ENCODE measurements at regions of chr2 and their contacts with region 1.

Region 1: GRCh38 chr2:177799531-177799930 is 273.0 kb downstream of the PDE11A start:
- DNase-seq: no peak
- ATAC-seq: peak in 2 of 4 donors; percentile 49 to 61
- H3K4me3 ChIP-seq: no peak overlapping the region
- H3K27ac ChIP-seq: no peak overlapping the region
- H3K4me1 ChIP-seq: peaks cover 0 to 25% (median 2%) of the 10 kb centered on the region in 12 donors
- H3K27me3 ChIP-seq: no peaks in the 10 kb centered on the region
- CTCF ChIP-seq: peak in 9 of 12 donors; percentile 22 to 58 (median 42)
- POLR2A ChIP-seq: no peak

Region 2: GRCh38 chr2:177906041-177906718 is 106.6 kb after region 1 on chr2:
- intact Hi-C with region 1: loop called in 2 of 10 experiments (anchors 2 to 10 kb)
- DNase-seq: peak in 4 of 5 donors; percentile 15 to 64 (median 32)
- ATAC-seq: peak in 2 of 4 donors; percentile 41 to 66
- H3K4me3 ChIP-seq: no peak overlapping the region
- H3K27ac ChIP-seq: no peak overlapping the region
- H3K4me1 ChIP-seq: peaks cover 0 to 19% (median 5%) of the 10 kb centered on the region in 12 donors
- H3K27me3 ChIP-seq: no peaks in the 10 kb centered on the region
- CTCF ChIP-seq: peak; percentile 54 to 80 (median 64)
- POLR2A ChIP-seq: no peak

Region 3: DNA sequence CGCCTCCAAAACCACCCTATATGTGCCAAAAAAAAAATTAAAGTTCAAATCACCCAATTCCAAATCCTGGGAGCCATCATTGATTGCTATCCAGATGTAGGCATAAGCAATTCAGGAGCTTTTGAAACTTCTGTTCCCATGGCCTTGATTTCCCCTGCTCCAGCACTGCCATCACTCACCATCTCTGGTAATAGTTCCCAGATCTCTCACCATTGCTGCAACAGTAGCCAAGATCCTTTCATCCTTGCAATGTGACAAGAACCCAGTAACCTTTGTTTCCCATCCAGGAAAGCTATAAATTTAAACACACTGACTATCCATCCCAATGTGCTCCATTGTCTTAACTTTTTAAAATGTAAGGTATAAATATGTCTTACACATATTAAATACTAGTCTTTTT is 117.6 kb after region 1 on chr2:
- intact Hi-C with region 1: loop called in 1 of 10 experiments (anchors 5 kb)
- DNase-seq: no peak
- ATAC-seq: peak in 3 of 4 donors; percentile 42 to 73 (median 72)
- H3K4me3 ChIP-seq: no peak overlapping the region
- H3K27ac ChIP-seq: peak overlapping the region in 2 of 12 donors; percentile 5 to 10
- H3K4me1 ChIP-seq: peaks cover 0 to 9% (median 0%) of the 10 kb centered on the region in 12 donors
- H3K27me3 ChIP-seq: no peaks in the 10 kb centered on the region
- CTCF ChIP-seq: no peak
- POLR2A ChIP-seq: no peak

Region 4: DNA sequence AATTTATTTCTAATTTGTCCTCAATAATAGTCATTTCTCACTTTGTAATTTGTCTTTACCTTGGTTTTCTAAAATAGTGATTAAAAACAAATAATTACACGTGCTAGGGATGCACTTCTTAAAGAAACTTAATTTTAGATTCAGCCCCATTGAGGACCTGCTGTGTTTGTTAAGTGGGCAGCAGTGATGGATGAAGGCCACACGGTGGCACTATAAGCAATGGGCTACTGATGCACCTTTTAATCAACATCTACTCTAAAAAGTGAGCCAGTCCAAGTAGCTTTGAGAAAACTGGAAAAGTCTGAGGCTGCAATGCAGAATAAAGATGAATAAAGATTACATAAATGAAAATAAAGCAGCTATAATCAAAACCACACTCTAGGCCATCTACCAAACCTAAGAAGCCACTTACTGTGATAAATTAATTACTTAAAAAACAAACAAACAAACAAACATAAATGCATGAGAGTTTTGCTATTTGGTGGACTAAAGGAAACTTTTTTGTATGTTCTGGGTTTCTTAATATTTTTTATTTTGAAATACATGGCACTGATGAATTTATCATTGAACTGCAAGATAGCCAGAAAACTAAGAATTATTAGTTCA is 183.8 kb after region 1 on chr2:
- intact Hi-C with region 1: loop called in 1 of 10 experiments (anchors 5 kb)
- DNase-seq: no peak
- ATAC-seq: no peak
- H3K4me3 ChIP-seq: no peak overlapping the region
- H3K27ac ChIP-seq: no peak overlapping the region
- H3K4me1 ChIP-seq: no peaks in the 10 kb centered on the region
- H3K27me3 ChIP-seq: no peaks in the 10 kb centered on the region
- CTCF ChIP-seq: peak; percentile 40 to 69 (median 58)
- POLR2A ChIP-seq: no peak

Region 5: GRCh38 chr2:178072383-178073301 is 273.1 kb after region 1 on chr2 and contains the start of gene PDE11A:
- intact Hi-C with region 1: loop called in 1 of 10 experiments (anchors 5 kb)
- DNase-seq: peak; percentile 57 to 88 (median 79)
- ATAC-seq: peak; percentile 89 to 99 (median 97)
- H3K4me3 ChIP-seq: peak within 1 kb of the TSS; percentile 9 to 58 (median 47)
- H3K27ac ChIP-seq: peak within 1 kb of the TSS in 4 of 12 donors; percentile 17 to 62 (median 32)
- H3K4me1 ChIP-seq: peaks cover 0 to 11% (median 0%) of the 10 kb centered on the region in 12 donors
- H3K27me3 ChIP-seq: peaks cover 0 to 41% (median 0%) of the 10 kb centered on the region in 9 donors
- CTCF ChIP-seq: no peak
- POLR2A ChIP-seq: peak in 1 of 2 donors; percentile 28
- total RNA-seq, gene PDE11A: 0.44 to 2.9 (median 1.0) TPM

Region 6: GRCh38 chr2:178112202-178113152 is 312.9 kb after region 1 on chr2 and contains the start of gene RBM45:
- intact Hi-C with region 1: loop called in 1 of 10 experiments (anchors 5 kb)
- DNase-seq: peak; percentile 85 to 96 (median 93)
- ATAC-seq: peak; percentile 95 to 99 (median 99)
- H3K4me3 ChIP-seq: peak within 1 kb of the TSS; percentile 63 to 98 (median 92)
- H3K27ac ChIP-seq: peak within 1 kb of the TSS; percentile 49 to 89 (median 79)
- H3K4me1 ChIP-seq: peaks cover 0 to 26% (median 10%) of the 10 kb centered on the region in 12 donors
- H3K27me3 ChIP-seq: no peaks in the 10 kb centered on the region
- CTCF ChIP-seq: peak; percentile 96 to 99 (median 98)
- POLR2A ChIP-seq: peak in 1 of 2 donors; percentile 52
- total RNA-seq, gene RBM45: 3.8 to 11.2 (median 6.8) TPM

Region 7: DNA sequence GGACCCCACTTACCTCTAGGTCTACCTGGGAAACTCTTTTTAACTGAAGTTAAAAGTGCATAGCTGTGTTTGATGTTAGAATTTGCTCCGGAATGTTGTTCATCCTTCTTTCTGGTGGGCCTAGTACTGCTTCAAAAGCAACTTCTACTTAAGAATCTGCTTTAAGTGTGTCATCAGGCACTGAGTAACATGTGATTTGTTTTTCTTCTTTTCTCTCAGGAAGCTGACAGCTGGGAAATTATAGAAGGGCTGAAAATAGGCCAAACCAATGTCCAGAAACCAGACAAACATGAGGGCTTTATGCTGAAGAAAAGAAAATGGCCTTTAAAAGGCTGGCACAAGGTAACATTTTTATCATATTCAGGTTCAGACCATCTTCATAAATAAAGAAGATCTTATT is 528.5 kb after region 1 on chr2:
- intact Hi-C with region 1: no loop called
- DNase-seq: no peak
- ATAC-seq: no peak
- H3K4me3 ChIP-seq: no peak overlapping the region
- H3K27ac ChIP-seq: no peak overlapping the region
- H3K4me1 ChIP-seq: peaks cover 0 to 6% (median 0%) of the 10 kb centered on the region in 12 donors
- H3K27me3 ChIP-seq: no peaks in the 10 kb centered on the region
- CTCF ChIP-seq: no peak
- POLR2A ChIP-seq: no peak